ENCODE measurements at regions of chr16 and their contacts with region 1.

Region 1: GRCh38 chr16:35298460-35299243 is 1839.2 kb downstream of the TP53TG3F start:
- DNase-seq: no peak
- ATAC-seq: no peak
- H3K4me3 Mint-ChIP-seq: no peak overlapping the region
- H3K27ac Mint-ChIP-seq: no peak overlapping the region
- H3K4me1 Mint-ChIP-seq: no peaks in the 10 kb centered on the region
- H3K27me3 Mint-ChIP-seq: no peaks in the 10 kb centered on the region

Region 2: GRCh38 chr16:35173295-35173694 is 125.4 kb before region 1 on chr16:
- CTCF ChIA-PET with region 1: no interaction called
- POLR2A ChIA-PET with region 1: no interaction called
- intact Hi-C with region 1: loop called in 1 of 2 experiments (anchors 10 kb)
- DNase-seq: no peak
- ATAC-seq: no peak
- H3K4me3 Mint-ChIP-seq: no peak overlapping the region
- H3K27ac Mint-ChIP-seq: no peak overlapping the region
- H3K4me1 Mint-ChIP-seq: no peaks in the 10 kb centered on the region
- H3K27me3 Mint-ChIP-seq: no peaks in the 10 kb centered on the region

Region 3: DNA sequence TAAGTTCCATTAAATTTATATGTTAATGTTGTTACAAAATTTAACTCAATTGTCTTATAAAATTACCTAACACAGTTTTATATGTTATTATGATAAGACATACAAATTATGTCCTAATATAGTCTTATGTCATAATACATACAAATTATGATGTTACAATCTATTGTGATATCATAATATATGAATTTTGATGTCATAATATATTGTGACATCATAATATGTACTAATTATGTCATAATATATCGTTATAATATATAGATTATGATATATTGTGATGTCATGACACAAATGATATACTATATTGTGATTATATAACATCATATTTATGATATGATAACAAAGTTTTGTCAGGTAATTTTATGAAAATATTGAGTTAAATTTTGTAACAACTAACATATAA is 49.6 kb before region 1 on chr16:
- CTCF ChIA-PET with region 1: no interaction called
- POLR2A ChIA-PET with region 1: no interaction called
- intact Hi-C with region 1: loop called in 1 of 2 experiments (anchors 10 kb)
- DNase-seq: no peak
- ATAC-seq: no peak
- H3K4me3 Mint-ChIP-seq: no peak overlapping the region
- H3K27ac Mint-ChIP-seq: no peak overlapping the region
- H3K4me1 Mint-ChIP-seq: no peaks in the 10 kb centered on the region
- H3K27me3 Mint-ChIP-seq: no peaks in the 10 kb centered on the region

Region 4: GRCh38 chr16:35409503-35409902 is 110.9 kb after region 1 on chr16:
- CTCF ChIA-PET with region 1: no interaction called
- POLR2A ChIA-PET with region 1: no interaction called
- intact Hi-C with region 1: no loop called
- DNase-seq: no peak
- ATAC-seq: no peak
- H3K4me3 Mint-ChIP-seq: no peak overlapping the region
- H3K27ac Mint-ChIP-seq: no peak overlapping the region
- H3K4me1 Mint-ChIP-seq: no peaks in the 10 kb centered on the region
- H3K27me3 Mint-ChIP-seq: no peaks in the 10 kb centered on the region

Region 5: GRCh38 chr16:35574454-35575431 is 276.1 kb after region 1 on chr16:
- CTCF ChIA-PET with region 1: no interaction called
- POLR2A ChIA-PET with region 1: no interaction called
- intact Hi-C with region 1: no loop called
- DNase-seq: no peak
- ATAC-seq: no peak
- H3K4me3 Mint-ChIP-seq: no peak overlapping the region
- H3K27ac Mint-ChIP-seq: no peak overlapping the region
- H3K4me1 Mint-ChIP-seq: no peaks in the 10 kb centered on the region
- H3K27me3 Mint-ChIP-seq: no peaks in the 10 kb centered on the region